Heart right ventricle (tissue), 16 donors: ENCODE measurements at regions of chr5 and their contacts with region 1.

Region 1: GRCh38 chr5:14108170-14108996 is 34.8 kb upstream of the TRIO start:
- DNase-seq: peak; percentile 23 to 65
- ATAC-seq: peak in 7 of 8 donors; percentile 77 to 93 (median 88)
- H3K4me3 ChIP-seq: peak overlapping the region in 7 of 10 donors; percentile 4 to 44 (median 38)
- H3K27ac ChIP-seq: peak overlapping the region in 5 of 10 donors; percentile 6 to 43 (median 8)
- H3K4me1 ChIP-seq: peaks cover 0 to 24% (median 13%) of the 10 kb centered on the region in 9 donors
- H3K27me3 ChIP-seq: no peaks in the 10 kb centered on the region
- CTCF ChIP-seq: peak; percentile 59 to 86 (median 80)

Region 2: GRCh38 chr5:13994621-13995253 is 113.6 kb before region 1 on chr5:
- intact Hi-C with region 1: loop called in 7 of 10 experiments (anchors 5 to 10 kb)
- DNase-seq: no peak
- ATAC-seq: no peak
- H3K4me3 ChIP-seq: no peak overlapping the region
- H3K27ac ChIP-seq: no peak overlapping the region
- H3K4me1 ChIP-seq: no peaks in the 10 kb centered on the region
- H3K27me3 ChIP-seq: peaks cover 0 to 3% (median 0%) of the 10 kb centered on the region in 7 donors
- CTCF ChIP-seq: no peak

Region 3: GRCh38 chr5:14032944-14033343 is 75.4 kb before region 1 on chr5:
- intact Hi-C with region 1: loop called in 1 of 10 experiments (anchors 5 kb)
- DNase-seq: no peak
- ATAC-seq: no peak
- H3K4me3 ChIP-seq: no peak overlapping the region
- H3K27ac ChIP-seq: no peak overlapping the region
- H3K4me1 ChIP-seq: peaks cover 0 to 31% (median 25%) of the 10 kb centered on the region in 9 donors
- H3K27me3 ChIP-seq: no peaks in the 10 kb centered on the region
- CTCF ChIP-seq: no peak

Region 4: DNA sequence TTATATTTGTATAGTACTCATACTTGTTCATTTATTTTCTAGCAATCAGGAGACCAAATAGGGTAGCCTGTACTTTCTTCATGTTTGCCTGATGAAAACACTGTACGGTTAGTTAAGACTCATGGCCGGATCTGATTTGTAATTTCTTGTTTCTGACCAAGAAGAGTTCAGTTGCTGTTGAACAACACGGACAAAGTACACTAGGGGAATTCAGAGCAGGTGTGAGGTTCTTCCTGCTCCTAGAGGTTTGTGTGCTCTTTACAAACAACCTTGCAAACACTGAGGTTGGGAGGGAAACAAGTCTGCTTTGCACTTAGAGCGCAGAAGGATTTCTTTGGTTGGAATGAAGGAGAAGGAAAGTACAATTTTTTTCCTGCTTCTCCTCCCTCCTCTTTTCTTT is 104.5 kb after region 1 on chr5:
- intact Hi-C with region 1: no loop called
- DNase-seq: no peak
- ATAC-seq: no peak
- H3K4me3 ChIP-seq: no peak overlapping the region
- H3K27ac ChIP-seq: no peak overlapping the region
- H3K4me1 ChIP-seq: peaks cover 3 to 76% (median 55%) of the 10 kb centered on the region in 9 donors
- H3K27me3 ChIP-seq: no peaks in the 10 kb centered on the region
- CTCF ChIP-seq: no peak

Region 5: GRCh38 chr5:14270209-14270702 is 161.9 kb after region 1 on chr5:
- intact Hi-C with region 1: loop called (anchors 1 to 5 kb)
- DNase-seq: peak in 1 of 2 donors; percentile 79
- ATAC-seq: peak; percentile 90 to 96 (median 95)
- H3K4me3 ChIP-seq: no peak overlapping the region
- H3K27ac ChIP-seq: peak overlapping the region in 9 of 10 donors; percentile 38 to 84 (median 68)
- H3K4me1 ChIP-seq: peaks cover 18 to 71% (median 51%) of the 10 kb centered on the region in 9 donors
- H3K27me3 ChIP-seq: no peaks in the 10 kb centered on the region
- CTCF ChIP-seq: peak; percentile 64 to 92 (median 83)

Region 6: DNA sequence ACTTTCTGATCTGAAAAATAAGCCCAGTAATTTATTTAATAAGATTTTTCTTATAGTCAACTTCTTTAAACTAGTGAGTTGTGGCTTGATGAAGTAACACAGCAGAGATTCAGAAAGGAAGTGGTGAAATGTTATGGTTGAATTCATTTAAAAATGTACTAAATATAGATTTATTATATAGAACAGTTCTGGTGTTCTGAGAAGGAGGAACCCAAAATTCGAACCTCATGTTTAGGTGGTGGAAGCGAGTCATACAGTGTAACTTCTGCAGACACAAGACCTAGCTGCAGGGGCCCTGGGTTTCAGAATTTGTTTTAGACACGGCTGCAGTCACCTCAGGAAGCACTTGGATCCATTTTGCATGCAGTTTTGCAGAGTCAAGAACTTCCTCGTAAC is 223.0 kb after region 1 on chr5:
- intact Hi-C with region 1: loop called in 1 of 10 experiments (anchors 10 kb)
- DNase-seq: no peak
- ATAC-seq: no peak
- H3K4me3 ChIP-seq: no peak overlapping the region
- H3K27ac ChIP-seq: peak overlapping the region in 1 of 10 donors; percentile 8
- H3K4me1 ChIP-seq: peaks cover 0 to 21% (median 2%) of the 10 kb centered on the region in 9 donors
- H3K27me3 ChIP-seq: no peaks in the 10 kb centered on the region
- CTCF ChIP-seq: no peak

Region 7: GRCh38 chr5:15160091-15160490 is 1051.7 kb after region 1 on chr5:
- intact Hi-C with region 1: no loop called
- DNase-seq: no peak
- ATAC-seq: no peak
- H3K4me3 ChIP-seq: no peak overlapping the region
- H3K27ac ChIP-seq: no peak overlapping the region
- H3K4me1 ChIP-seq: no peaks in the 10 kb centered on the region
- H3K27me3 ChIP-seq: no peaks in the 10 kb centered on the region
- CTCF ChIP-seq: no peak